Gastrocnemius medialis (tissue), 4 donors: ENCODE measurements at regions of chr7 and their contacts with region 1.

Region 1: GRCh38 chr7:67637027-67637358 is 640.4 kb downstream of the TYW1 start:
- DNase-seq: no peak
- ATAC-seq: no peak
- H3K4me3 ChIP-seq: no peak overlapping the region
- H3K27ac ChIP-seq: no peak overlapping the region
- H3K4me1 ChIP-seq: no peaks in the 10 kb centered on the region
- H3K27me3 ChIP-seq: no peaks in the 10 kb centered on the region
- CTCF ChIP-seq: no peak
- POLR2A ChIP-seq: no peak

Region 2: DNA sequence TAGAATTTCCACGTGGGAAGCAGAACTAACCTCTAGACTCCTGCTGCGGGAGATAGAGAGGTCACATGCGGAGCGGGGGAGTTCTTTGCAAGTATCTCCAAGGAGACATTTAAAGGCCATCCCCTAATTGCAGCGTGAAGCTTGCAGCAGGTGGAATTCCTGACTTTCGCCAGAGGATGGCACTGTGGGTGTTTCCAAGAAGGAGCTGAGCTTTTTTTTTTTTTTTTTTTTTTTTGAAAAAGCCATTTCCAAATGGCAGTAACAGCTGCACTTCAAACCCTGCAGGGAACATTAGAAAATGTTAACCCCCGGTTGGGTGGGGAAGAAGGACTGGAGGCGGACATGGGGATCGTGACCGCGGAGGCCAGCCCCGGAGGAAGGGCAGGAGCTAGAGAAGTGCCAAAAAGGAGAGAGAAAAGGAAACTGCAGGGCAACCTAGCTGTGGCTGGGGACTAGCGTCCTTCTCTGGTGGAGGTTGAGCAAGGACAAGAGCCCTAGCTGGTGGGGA is 152.7 kb before region 1 on chr7:
- in situ Hi-C with region 1: no loop called
- intact Hi-C with region 1: loop called (anchors 10 kb)
- DNase-seq: peak; percentile 7 to 30
- ATAC-seq: peak; percentile 65 to 68
- H3K4me3 ChIP-seq: peak overlapping the region; percentile 39 to 55 (median 48)
- H3K27ac ChIP-seq: no peak overlapping the region
- H3K4me1 ChIP-seq: peaks cover 0 to 8% of the 10 kb centered on the region in 2 donors
- H3K27me3 ChIP-seq: no peaks in the 10 kb centered on the region
- CTCF ChIP-seq: peak; percentile 0 to 70 (median 45)
- POLR2A ChIP-seq: no peak

Region 3: DNA sequence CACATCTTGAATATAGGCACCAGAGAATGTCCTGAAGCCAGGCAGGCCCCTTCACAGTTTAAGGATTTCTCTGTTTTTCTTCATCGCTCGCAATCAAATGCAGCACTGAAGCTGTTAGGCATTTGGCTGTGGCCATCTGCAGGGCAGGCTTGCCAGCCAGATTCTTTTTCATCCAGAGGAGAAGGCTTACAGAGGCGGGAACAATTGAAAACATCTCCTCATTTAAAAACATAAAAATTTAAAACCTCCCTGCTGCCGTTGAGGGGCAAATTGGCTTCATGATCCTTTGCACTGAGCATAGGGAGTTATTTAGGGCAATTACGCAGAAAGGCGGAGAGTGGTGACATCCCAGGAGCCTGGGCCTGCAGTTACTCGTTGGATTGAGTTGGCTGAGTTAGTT is 140.4 kb before region 1 on chr7:
- in situ Hi-C with region 1: no loop called
- intact Hi-C with region 1: no loop called
- DNase-seq: no peak
- ATAC-seq: no peak
- H3K4me3 ChIP-seq: no peak overlapping the region
- H3K27ac ChIP-seq: no peak overlapping the region
- H3K4me1 ChIP-seq: no peaks in the 10 kb centered on the region
- H3K27me3 ChIP-seq: no peaks in the 10 kb centered on the region
- CTCF ChIP-seq: no peak
- POLR2A ChIP-seq: no peak

Region 4: GRCh38 chr7:67692425-67692824 is 55.4 kb after region 1 on chr7:
- in situ Hi-C with region 1: no loop called
- intact Hi-C with region 1: no loop called
- DNase-seq: no peak
- ATAC-seq: no peak
- H3K4me3 ChIP-seq: no peak overlapping the region
- H3K27ac ChIP-seq: no peak overlapping the region
- H3K4me1 ChIP-seq: no peaks in the 10 kb centered on the region
- H3K27me3 ChIP-seq: no peaks in the 10 kb centered on the region
- CTCF ChIP-seq: no peak
- POLR2A ChIP-seq: no peak

Region 5: DNA sequence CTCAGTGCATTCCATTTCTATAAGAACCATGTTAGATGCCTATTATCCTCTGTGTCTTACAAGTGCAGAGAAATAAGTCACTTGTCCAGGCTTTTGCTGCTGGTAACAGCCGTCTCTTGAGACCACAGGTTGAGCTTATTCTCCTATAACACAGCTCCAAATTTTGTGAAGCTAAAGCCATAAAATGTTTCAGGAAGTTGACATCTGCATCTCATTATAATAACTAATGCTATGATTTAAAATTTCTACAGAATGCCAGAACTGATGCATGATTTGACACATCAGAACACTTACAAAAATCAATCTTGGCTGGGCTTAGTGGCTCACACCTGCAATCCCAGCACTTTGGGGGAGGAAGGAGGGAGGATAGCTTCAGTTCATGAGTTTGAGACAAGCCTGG is 346.5 kb after region 1 on chr7:
- in situ Hi-C with region 1: no loop called
- intact Hi-C with region 1: no loop called
- DNase-seq: no peak
- ATAC-seq: no peak
- H3K4me3 ChIP-seq: no peak overlapping the region
- H3K27ac ChIP-seq: no peak overlapping the region
- H3K4me1 ChIP-seq: no peaks in the 10 kb centered on the region
- H3K27me3 ChIP-seq: no peaks in the 10 kb centered on the region
- CTCF ChIP-seq: no peak
- POLR2A ChIP-seq: no peak

Region 6: DNA sequence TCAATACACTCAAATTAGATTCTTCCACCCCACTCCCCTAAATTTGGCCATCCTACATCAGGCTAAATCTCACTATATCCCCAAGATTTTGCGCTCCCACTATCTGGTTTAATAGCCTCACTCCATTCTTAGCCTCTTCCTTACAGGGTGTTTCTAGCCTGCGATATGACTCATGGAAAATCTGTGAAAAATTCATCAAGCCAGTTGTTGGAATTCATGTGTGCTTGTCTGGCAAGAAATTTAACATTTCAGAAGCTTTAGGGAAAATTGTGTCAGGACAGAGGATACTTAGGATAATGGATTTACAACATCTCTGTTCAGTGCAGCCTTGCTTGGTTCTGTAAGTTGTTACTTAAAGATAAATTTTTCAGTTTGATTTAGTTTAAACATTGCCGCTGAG is 711.4 kb after region 1 on chr7:
- in situ Hi-C with region 1: no loop called
- intact Hi-C with region 1: no loop called
- DNase-seq: no peak
- ATAC-seq: no peak
- H3K4me3 ChIP-seq: no peak overlapping the region
- H3K27ac ChIP-seq: no peak overlapping the region
- H3K4me1 ChIP-seq: peaks cover 3 to 11% of the 10 kb centered on the region in 2 donors
- H3K27me3 ChIP-seq: no peaks in the 10 kb centered on the region
- CTCF ChIP-seq: no peak
- POLR2A ChIP-seq: no peak